GM12878 (cell line): ENCODE measurements at regions of chr5 and their contacts with region 1.

Region 1: GRCh38 chr5:72301557-72301956 is 18.5 kb downstream of the MRPS27 start:
- DNase-seq: no peak
- ATAC-seq: peak; percentile 58
- H3K4me3 ChIP-seq: peak overlapping the region; percentile 16; the same call in 1 of the 2 replicates
- H3K27ac ChIP-seq: peak overlapping the region; percentile 62
- H3K4me1 ChIP-seq: peaks cover 59% of the 10 kb centered on the region
- H3K27me3 ChIP-seq: no peaks in the 10 kb centered on the region
- CTCF ChIP-seq: no peak
- EP300 ChIP-seq: no peak
- POLR2A ChIP-seq: peak; percentile 57; the same call in 1 of the 2 replicates
- RAD21 ChIP-seq: no peak

Region 2: DNA sequence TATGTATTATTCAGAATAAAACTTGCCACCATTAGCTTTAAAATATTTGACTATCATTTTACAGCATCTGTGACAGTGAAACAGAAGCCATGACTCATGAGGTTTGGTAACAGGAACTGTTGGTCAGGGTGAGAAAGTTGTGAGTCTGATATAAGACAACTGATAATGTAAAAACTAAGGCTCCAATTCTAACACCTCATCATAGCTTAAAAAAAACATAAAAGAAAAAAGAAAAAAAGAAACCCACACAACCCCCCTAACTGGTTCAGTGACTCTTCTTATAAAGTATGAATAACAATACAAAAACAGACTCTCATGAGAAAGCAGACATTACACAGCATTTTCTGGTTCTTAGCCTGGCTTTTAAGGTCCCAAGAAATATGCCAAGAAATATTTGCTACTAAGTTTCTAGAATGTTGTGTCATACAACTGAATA is 67.3 kb before region 1 on chr5:
- CTCF ChIA-PET with region 1: interaction called, 6 read pairs
- POLR2A ChIA-PET with region 1: interaction called, 10 read pairs
- RAD21 ChIA-PET with region 1: interaction called, 31 read pairs
- SMC1A ChIA-PET with region 1: interaction called, 8 read pairs
- in situ Hi-C with region 1: no loop called
- intact Hi-C with region 1: loop called (anchors 5 kb)
- DNase-seq: peak; percentile 52
- ATAC-seq: peak; percentile 96
- H3K4me3 ChIP-seq: no peak overlapping the region
- H3K27ac ChIP-seq: peak overlapping the region; percentile 32
- H3K4me1 ChIP-seq: peaks cover 32% of the 10 kb centered on the region
- H3K27me3 ChIP-seq: no peaks in the 10 kb centered on the region
- CTCF ChIP-seq: no peak
- EP300 ChIP-seq: peak; percentile 54 to 81; a peak in 2 of 4 replicates
- POLR2A ChIP-seq: no peak
- RAD21 ChIP-seq: no peak

Region 3: GRCh38 chr5:72290356-72291133 is 11.0 kb before region 1 on chr5:
- CTCF ChIA-PET with region 1: interaction called, 20 read pairs
- POLR2A ChIA-PET with region 1: interaction called, 6 read pairs
- RAD21 ChIA-PET with region 1: interaction called, 29 read pairs
- SMC1A ChIA-PET with region 1: interaction called, 19 read pairs
- in situ Hi-C with region 1: no loop called
- intact Hi-C with region 1: no loop called
- DNase-seq: no peak
- ATAC-seq: no peak
- H3K4me3 ChIP-seq: no peak overlapping the region
- H3K27ac ChIP-seq: peak overlapping the region; percentile 50
- H3K4me1 ChIP-seq: peaks cover 23% of the 10 kb centered on the region
- H3K27me3 ChIP-seq: no peaks in the 10 kb centered on the region
- CTCF ChIP-seq: no peak
- EP300 ChIP-seq: no peak
- POLR2A ChIP-seq: no peak
- RAD21 ChIP-seq: no peak